Aorta (tissue), 5 donors: ENCODE measurements at regions of chr7 and their contacts with region 1.

Region 1: DNA sequence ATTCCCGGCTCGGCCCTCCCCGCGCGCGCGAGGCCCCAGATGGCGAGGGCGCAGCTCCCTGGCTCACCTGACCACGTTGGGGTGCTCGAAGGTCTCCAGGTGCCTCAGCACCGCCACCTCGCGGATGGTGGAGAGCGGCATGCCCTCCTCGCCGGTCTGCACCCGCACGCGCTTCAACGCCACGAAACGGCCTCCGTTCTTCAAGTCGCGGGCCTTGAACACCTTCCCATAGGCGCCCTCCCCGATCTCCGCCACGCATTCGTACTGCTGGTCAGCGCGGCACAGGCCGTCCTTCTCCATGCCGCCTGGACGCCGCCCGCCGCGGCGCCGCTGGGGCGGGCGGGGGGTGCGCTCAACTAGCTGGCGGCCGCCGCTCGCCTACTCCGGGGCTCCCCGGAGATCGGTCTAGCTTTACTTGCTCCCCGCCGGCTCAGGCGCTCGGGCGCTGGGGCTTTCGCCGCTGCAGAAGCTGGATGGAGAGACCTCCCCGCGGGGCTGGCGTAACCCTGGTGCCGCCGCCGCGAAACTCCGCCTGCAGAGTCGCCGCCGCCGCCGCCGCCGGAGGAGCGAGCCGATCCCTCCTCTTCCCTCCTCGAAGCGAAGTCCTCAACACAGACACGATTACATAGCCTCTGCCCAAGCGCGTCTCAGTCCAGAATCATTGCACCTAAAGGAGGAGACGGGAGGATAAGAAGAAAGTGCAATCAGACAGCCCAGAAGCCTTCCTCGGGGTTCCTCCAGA is 3.2 kb downstream of the CDK6 start:
- DNase-seq: peak; percentile 90 to 95
- ATAC-seq: peak; percentile 89
- H3K4me3 ChIP-seq: peak overlapping the region; percentile 97 to 98
- H3K27ac ChIP-seq: peak overlapping the region in 1 of 2 donors; percentile 60
- H3K4me1 ChIP-seq: no peaks in the 10 kb centered on the region
- H3K27me3 ChIP-seq: no peaks in the 10 kb centered on the region

Region 2: GRCh38 chr7:92528188-92528957 is 304.8 kb before region 1 on chr7 and contains the starts of genes PEX1 and RBM48:
- intact Hi-C with region 1: loop called in 1 of 2 experiments (anchors 5 kb)
- DNase-seq: peak; percentile 98
- ATAC-seq: peak; percentile 99
- H3K4me3 ChIP-seq: peak within 1 kb of the TSS; percentile 84 to 97
- H3K27ac ChIP-seq: peak within 1 kb of the TSS; percentile 1 to 66
- H3K4me1 ChIP-seq: peaks cover 0 to 2% of the 10 kb centered on the region in 2 donors
- H3K27me3 ChIP-seq: no peaks in the 10 kb centered on the region
- total RNA-seq, gene PEX1: 17.1 to 18.5 TPM
- total RNA-seq, gene RBM48: 9.8 to 12.9 TPM

Region 3: GRCh38 chr7:92569134-92569533 is 264.1 kb before region 1 on chr7:
- intact Hi-C with region 1: no loop called
- DNase-seq: no peak
- ATAC-seq: no peak
- H3K4me3 ChIP-seq: no peak overlapping the region
- H3K27ac ChIP-seq: no peak overlapping the region
- H3K4me1 ChIP-seq: no peaks in the 10 kb centered on the region
- H3K27me3 ChIP-seq: no peaks in the 10 kb centered on the region

Region 4: DNA sequence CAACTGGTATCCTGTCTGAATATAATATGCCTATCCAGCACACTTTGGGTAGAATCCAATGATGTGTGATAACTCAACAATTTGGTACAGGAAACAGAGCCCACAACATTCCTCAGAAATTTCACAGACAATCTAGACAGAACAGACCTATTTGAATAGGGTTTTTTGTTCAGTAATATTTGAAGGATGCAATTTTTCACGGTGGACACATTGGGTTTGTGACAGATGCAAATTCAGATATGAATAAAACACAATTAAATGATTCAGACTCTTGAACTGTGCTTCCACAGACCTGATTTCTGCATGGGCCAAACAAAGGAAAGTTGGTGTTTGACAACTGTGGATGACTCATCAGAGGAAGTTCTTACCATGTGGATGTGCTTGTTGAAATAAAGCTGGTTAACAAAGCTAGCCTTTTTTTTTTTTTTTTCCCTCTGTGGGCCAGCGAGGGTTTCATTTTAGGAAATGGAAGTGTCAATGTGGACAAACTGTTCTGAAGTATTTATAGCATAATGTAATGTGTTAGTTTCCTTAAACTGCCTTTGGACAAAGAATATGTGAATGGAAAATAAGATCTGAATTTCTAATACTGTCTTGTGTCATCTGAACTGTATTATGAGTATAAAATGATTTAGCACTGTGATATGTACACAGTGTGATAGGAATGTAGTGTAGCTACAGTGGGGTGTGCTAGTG is 199.8 kb before region 1 on chr7:
- intact Hi-C with region 1: loop called in 1 of 2 experiments (anchors 5 kb)
- DNase-seq: no peak
- ATAC-seq: peak; percentile 84
- H3K4me3 ChIP-seq: no peak overlapping the region
- H3K27ac ChIP-seq: no peak overlapping the region
- H3K4me1 ChIP-seq: peaks cover 0 to 10% of the 10 kb centered on the region in 2 donors
- H3K27me3 ChIP-seq: no peaks in the 10 kb centered on the region

Region 5: GRCh38 chr7:92674127-92674778 is 158.9 kb before region 1 on chr7:
- intact Hi-C with region 1: no loop called
- DNase-seq: no peak
- ATAC-seq: no peak
- H3K4me3 ChIP-seq: no peak overlapping the region
- H3K27ac ChIP-seq: no peak overlapping the region
- H3K4me1 ChIP-seq: no peaks in the 10 kb centered on the region
- H3K27me3 ChIP-seq: no peaks in the 10 kb centered on the region

Region 6: DNA sequence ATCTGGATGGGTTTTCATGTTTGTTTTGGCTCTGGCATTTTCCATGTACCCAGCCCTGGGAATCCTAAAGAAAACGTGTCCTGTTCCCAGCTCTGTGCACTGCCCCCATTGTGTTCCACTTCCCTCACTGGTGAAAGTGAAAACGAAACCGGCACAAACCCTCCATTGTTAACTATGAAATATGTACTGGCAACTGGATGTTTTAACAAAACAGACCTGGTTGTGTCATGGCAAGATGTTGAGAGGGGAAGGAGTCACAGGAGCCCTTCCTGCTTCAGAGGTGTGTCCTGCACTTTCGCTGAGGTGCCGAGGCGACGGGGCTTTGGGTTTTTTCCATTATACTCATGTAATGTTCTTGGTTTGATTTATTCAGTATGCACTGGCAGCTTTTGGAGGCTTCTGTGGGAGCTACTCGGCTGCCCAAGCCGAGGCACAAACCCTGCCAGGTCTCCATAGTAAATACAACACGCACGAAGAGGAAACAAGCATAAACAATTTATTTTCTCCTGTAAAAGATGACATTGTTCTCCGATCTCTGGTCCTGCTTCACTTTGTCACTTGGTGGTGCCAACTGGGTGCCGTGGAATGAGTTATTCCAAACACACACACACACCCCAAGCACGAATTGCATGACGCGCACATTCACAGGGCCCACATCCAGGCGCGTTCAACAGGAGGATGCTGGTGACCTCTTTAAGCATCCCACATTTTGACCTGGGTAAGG is 115.0 kb before region 1 on chr7:
- intact Hi-C with region 1: loop called (anchors 2 to 5 kb)
- DNase-seq: peak; percentile 57 to 79
- ATAC-seq: peak; percentile 92
- H3K4me3 ChIP-seq: peak overlapping the region; percentile 56 to 96
- H3K27ac ChIP-seq: peak overlapping the region; percentile 81 to 99
- H3K4me1 ChIP-seq: peaks cover 0 to 4% of the 10 kb centered on the region in 2 donors
- H3K27me3 ChIP-seq: no peaks in the 10 kb centered on the region

Region 7: GRCh38 chr7:92790992-92791391 is 42.2 kb before region 1 on chr7:
- intact Hi-C with region 1: loop called (anchors 2 to 5 kb)
- DNase-seq: peak; percentile 52 to 74
- ATAC-seq: peak; percentile 79
- H3K4me3 ChIP-seq: no peak overlapping the region
- H3K27ac ChIP-seq: peak overlapping the region in 1 of 2 donors; percentile 63
- H3K4me1 ChIP-seq: peaks cover 6 to 9% of the 10 kb centered on the region in 2 donors
- H3K27me3 ChIP-seq: no peaks in the 10 kb centered on the region

Region 8: DNA sequence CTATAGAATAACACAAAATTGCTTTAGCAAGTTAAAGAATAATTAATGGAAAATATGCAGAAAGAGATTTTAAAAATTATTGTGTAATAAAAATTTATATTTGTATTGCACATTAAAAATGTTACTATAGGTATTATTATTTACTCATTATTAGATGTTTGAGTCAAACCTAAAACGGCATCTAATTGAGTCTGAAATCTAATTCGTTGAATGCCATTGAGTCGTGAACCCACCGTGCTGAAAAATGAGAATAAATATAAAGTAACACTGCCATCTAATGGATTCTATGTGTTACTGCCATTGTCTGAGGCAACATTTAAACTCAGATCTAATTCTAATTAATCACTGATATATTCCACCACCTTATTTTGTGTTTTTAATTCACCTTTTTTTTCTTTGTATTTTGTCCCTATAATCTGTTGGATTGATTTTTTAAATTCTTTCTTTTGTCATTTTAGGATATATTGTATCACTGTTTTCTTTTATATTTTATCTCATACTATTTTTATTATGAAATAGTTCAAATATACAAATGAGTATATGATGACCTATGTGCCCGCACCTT is 222.4 kb after region 1 on chr7:
- intact Hi-C with region 1: loop called in 1 of 2 experiments (anchors 5 kb)
- DNase-seq: no peak
- ATAC-seq: peak; percentile 73
- H3K4me3 ChIP-seq: no peak overlapping the region
- H3K27ac ChIP-seq: no peak overlapping the region
- H3K4me1 ChIP-seq: no peaks in the 10 kb centered on the region
- H3K27me3 ChIP-seq: no peaks in the 10 kb centered on the region